ENCODE measurements at regions of chr6 and their contacts with region 1.

Region 1: DNA sequence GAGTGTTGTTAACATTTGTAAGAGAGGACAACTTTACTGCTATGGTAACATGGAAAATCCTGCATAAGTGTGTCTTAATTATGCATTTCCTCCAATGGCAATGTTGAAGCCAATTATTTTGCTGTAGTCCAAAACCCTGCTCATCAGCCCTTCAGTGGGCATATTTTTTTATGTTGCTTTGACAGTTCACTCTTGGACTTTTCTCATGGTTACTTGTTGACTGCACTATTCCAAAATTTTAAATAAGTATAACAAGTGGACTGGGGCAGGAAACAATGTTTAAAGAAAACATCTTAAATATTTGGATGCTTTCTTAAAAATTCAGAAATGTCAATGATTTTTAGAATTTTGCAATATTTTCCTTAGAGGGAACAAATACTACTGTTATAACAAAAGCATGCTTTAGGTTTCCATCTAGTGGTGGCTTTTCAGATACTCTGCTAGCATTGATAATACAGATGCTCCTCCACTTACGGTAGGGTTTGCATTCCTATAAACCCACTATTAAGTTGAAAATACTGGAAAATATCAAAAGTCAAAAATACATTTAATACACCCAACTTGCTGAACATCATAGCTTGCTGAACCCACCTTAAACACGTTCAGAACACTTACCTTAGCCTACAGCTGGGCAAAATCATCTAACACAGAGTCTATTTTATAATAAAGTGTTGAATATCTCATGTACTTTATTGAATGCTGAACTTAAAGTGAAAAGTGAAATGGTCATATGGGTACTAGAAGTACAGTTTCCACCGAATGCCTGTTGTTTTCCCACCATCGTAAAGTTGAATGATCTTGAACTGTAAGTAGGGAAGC is 86.4 kb downstream of the ADGRG6 start:
- DNase-seq: no peak
- ATAC-seq: no peak
- H3K4me3 ChIP-seq: no peak overlapping the region
- H3K27ac ChIP-seq: no peak overlapping the region
- H3K4me1 ChIP-seq: no peaks in the 10 kb centered on the region
- H3K27me3 ChIP-seq: no peaks in the 10 kb centered on the region
- CTCF ChIP-seq: peak; percentile 39 to 67 (median 52)
- POLR2A ChIP-seq: no peak

Region 2: GRCh38 chr6:142146828-142147662 is 241.2 kb before region 1 on chr6 and contains the starts of genes NMBR and VTA1:
- intact Hi-C with region 1: loop called in 5 of 10 experiments (anchors 5 to 10 kb)
- DNase-seq: peak; percentile 97 to 98 (median 98)
- ATAC-seq: peak; percentile 99 to 100 (median 100)
- H3K4me3 ChIP-seq: peak within 1 kb of the TSS; percentile 75 to 97 (median 84)
- H3K27ac ChIP-seq: peak within 1 kb of the TSS in 11 of 12 donors; percentile 38 to 82 (median 68)
- H3K4me1 ChIP-seq: peaks cover 0 to 34% (median 18%) of the 10 kb centered on the region in 12 donors
- H3K27me3 ChIP-seq: no peaks in the 10 kb centered on the region
- CTCF ChIP-seq: peak; percentile 84 to 98 (median 91)
- POLR2A ChIP-seq: peak in 1 of 2 donors; percentile 61
- total RNA-seq, gene NMBR: 0.67 TPM in 1 of 9 donors, not detected in the others
- total RNA-seq, gene VTA1: 32.0 to 49.4 (median 41.0) TPM

Region 3: DNA sequence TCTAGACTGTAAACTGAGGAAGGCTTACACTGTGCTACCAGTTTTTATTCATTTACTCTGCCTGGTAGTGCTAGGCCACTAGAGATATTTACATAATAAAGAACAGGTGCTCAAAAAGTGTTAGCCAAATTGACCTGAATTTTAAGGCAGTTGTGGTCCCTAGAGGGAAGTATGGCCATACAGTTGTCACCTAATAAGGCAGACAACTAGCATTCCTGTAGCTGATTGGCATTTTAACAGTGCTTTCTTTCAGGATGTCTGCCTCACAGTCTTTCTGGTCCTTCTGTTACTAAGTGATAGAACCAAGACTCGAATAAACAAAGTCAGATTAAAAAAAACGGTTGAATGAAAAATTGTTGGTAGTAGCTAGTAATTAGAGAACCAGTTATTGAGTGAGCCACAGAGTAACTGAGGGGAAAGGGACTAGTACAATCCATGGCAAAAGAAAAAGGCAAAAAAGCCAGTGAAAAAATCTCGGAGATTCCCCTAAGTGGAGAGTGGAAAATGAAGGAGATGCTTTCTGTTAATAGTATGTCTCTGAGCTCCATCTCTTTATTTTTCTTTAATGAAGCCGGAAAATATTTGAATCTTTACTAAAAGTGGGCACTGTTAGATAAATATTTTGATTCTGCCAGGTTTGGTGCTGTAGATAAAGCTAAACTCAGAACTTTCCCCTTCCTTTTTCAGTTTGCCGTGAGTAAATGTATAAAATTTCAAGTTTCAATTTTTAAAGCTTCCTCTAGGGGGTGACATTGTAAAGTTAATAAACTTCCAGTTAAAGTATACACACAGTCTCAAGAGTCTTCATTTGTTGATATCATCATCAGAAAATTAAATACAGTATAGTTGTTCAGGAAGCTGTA is 232.1 kb before region 1 on chr6:
- intact Hi-C with region 1: loop called in 5 of 10 experiments (anchors 2 to 5 kb)
- DNase-seq: no peak
- ATAC-seq: peak in 1 of 4 donors; percentile 54
- H3K4me3 ChIP-seq: no peak overlapping the region
- H3K27ac ChIP-seq: no peak overlapping the region
- H3K4me1 ChIP-seq: peaks cover 0 to 24% (median 2%) of the 10 kb centered on the region in 12 donors
- H3K27me3 ChIP-seq: no peaks in the 10 kb centered on the region
- CTCF ChIP-seq: peak; percentile 28 to 54 (median 44)
- POLR2A ChIP-seq: no peak

Region 4: DNA sequence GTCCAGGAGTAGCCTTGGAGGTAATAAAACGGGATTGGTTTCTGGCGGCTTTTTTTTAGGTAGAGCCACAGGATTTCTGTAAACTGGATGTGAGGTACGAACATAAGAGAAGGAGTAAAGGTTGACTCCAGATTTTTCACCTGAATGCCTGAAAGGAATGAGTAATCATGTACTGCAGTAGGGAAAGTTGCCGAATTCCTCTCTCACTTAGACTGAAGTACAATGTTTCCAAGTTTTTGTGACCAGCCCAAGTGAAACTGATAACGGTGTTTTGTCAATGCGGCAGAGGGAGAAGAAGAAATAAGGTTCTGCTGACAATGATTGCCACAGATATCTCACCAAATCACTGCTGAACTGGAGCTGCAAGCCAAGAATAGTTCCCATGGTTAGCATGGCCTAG is 166.2 kb before region 1 on chr6:
- intact Hi-C with region 1: loop called in 1 of 10 experiments (anchors 10 kb)
- DNase-seq: no peak
- ATAC-seq: no peak
- H3K4me3 ChIP-seq: no peak overlapping the region
- H3K27ac ChIP-seq: no peak overlapping the region
- H3K4me1 ChIP-seq: no peaks in the 10 kb centered on the region
- H3K27me3 ChIP-seq: no peaks in the 10 kb centered on the region
- CTCF ChIP-seq: no peak
- POLR2A ChIP-seq: no peak

Region 5: GRCh38 chr6:142455957-142456589 is 67.9 kb after region 1 on chr6:
- intact Hi-C with region 1: no loop called
- DNase-seq: no peak
- ATAC-seq: no peak
- H3K4me3 ChIP-seq: no peak overlapping the region
- H3K27ac ChIP-seq: no peak overlapping the region
- H3K4me1 ChIP-seq: no peaks in the 10 kb centered on the region
- H3K27me3 ChIP-seq: no peaks in the 10 kb centered on the region
- CTCF ChIP-seq: no peak
- POLR2A ChIP-seq: no peak

Region 6: DNA sequence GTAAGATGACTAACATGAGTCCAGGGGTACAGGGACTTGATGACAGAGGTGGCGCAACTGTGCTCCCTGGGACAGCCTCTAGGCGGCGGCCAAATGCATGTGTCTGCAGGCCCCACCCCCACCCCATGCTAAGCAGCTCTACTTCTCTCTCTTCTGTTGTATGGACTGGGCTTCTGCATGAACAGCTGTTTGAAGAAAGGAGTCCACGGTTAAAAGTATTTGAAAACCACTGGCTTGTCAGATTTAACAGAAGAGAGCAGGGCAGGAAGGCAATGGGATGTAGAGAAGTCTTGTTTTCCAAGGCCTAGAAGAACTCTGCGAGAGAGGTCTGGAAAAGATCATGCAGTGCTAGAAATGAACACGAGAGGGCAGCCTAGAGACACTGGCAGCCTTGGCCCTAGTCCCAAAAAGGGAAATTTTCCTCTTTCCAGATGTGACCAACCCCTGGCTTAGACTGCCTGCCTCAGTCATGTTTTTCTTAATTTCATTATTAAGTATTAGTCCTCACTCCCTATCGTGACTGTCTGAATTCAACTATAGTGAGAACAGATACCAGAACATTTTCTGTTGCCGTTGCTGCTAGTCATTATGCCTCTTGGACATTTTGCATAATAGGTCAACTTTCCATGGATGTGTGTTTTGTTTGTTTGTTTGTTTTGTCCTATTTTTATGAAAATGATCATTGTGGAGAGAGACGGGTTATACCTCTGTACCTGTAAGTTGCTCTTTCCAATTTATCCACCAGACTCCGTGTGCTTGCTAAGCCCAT is 178.6 kb after region 1 on chr6:
- intact Hi-C with region 1: no loop called
- DNase-seq: peak in 3 of 5 donors; percentile 26 to 28 (median 28)
- ATAC-seq: peak in 3 of 4 donors; percentile 54 to 59 (median 58)
- H3K4me3 ChIP-seq: no peak overlapping the region
- H3K27ac ChIP-seq: no peak overlapping the region
- H3K4me1 ChIP-seq: peaks cover 0 to 22% (median 7%) of the 10 kb centered on the region in 12 donors
- H3K27me3 ChIP-seq: no peaks in the 10 kb centered on the region
- CTCF ChIP-seq: peak; percentile 66 to 90 (median 82)
- POLR2A ChIP-seq: no peak

Measured in heart left ventricle (tissue), 16 donors.